Breast epithelium (tissue), 4 donors: ENCODE measurements at regions of chr2 and their contacts with region 1.

Region 1: DNA sequence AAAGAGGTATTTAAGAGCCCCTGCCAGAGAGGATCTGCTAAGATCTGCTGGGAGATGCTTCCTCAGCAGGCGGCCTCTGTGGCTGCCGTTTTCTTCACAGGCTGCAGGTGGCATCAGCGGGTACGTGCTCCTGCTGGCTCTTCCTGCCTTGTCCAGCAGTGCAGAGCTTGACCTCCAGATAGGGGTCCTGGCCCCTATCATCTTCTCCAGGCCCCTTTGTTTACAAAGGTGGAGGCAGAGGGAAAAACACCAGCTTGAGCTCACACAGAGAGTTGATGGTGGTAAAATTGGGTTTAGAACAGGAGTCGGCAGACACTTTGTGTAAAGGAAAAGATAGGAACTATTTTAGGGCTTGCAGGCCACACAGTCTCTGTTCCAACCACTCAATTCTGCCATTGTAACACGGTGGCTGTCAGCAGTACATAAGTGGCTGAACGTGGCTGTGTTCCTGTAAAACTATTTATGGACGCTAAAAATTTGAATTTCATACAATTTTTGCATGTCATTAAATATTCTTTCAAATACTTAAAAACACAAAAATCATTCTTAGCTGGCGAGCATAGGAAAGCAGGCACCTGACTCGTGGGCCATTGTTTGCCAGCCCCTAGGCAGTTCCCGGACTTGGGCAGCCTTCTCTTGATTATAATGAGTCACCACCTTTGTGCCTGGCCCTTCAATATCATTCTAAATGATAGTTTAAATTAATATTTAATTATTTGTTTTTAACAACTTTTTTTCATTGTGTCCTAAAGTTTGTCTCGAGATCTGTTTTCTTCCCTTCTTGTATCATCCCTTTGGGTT is 98.2 kb upstream of the B3GNT7 start:
- DNase-seq: no peak
- H3K4me3 ChIP-seq: no peak overlapping the region
- H3K27ac ChIP-seq: no peak overlapping the region
- H3K4me1 ChIP-seq: no peaks in the 10 kb centered on the region
- H3K27me3 ChIP-seq: no peaks in the 10 kb centered on the region
- CTCF ChIP-seq: peak in 2 of 3 donors; percentile 44 to 55
- POLR2A ChIP-seq: no peak

Region 2: GRCh38 chr2:231139796-231140195 is 157.5 kb before region 1 on chr2:
- intact Hi-C with region 1: no loop called
- DNase-seq: no peak
- H3K4me3 ChIP-seq: no peak overlapping the region
- H3K27ac ChIP-seq: no peak overlapping the region
- H3K4me1 ChIP-seq: no peaks in the 10 kb centered on the region
- H3K27me3 ChIP-seq: no peaks in the 10 kb centered on the region
- CTCF ChIP-seq: no peak
- POLR2A ChIP-seq: no peak

Region 3: GRCh38 chr2:231399853-231400680 is 102.8 kb after region 1 on chr2:
- intact Hi-C with region 1: loop called (anchors 10 kb)
- DNase-seq: no peak
- H3K4me3 ChIP-seq: no peak overlapping the region
- H3K27ac ChIP-seq: peak overlapping the region in 1 of 2 donors; percentile 38
- H3K4me1 ChIP-seq: peaks cover 3 to 7% of the 10 kb centered on the region in 2 donors
- H3K27me3 ChIP-seq: peaks cover 3 to 4% of the 10 kb centered on the region in 2 donors
- CTCF ChIP-seq: no peak
- POLR2A ChIP-seq: no peak